Tibial artery (tissue), 4 donors: ENCODE measurements at regions of chr3 and their contacts with region 1.

Region 1: DNA sequence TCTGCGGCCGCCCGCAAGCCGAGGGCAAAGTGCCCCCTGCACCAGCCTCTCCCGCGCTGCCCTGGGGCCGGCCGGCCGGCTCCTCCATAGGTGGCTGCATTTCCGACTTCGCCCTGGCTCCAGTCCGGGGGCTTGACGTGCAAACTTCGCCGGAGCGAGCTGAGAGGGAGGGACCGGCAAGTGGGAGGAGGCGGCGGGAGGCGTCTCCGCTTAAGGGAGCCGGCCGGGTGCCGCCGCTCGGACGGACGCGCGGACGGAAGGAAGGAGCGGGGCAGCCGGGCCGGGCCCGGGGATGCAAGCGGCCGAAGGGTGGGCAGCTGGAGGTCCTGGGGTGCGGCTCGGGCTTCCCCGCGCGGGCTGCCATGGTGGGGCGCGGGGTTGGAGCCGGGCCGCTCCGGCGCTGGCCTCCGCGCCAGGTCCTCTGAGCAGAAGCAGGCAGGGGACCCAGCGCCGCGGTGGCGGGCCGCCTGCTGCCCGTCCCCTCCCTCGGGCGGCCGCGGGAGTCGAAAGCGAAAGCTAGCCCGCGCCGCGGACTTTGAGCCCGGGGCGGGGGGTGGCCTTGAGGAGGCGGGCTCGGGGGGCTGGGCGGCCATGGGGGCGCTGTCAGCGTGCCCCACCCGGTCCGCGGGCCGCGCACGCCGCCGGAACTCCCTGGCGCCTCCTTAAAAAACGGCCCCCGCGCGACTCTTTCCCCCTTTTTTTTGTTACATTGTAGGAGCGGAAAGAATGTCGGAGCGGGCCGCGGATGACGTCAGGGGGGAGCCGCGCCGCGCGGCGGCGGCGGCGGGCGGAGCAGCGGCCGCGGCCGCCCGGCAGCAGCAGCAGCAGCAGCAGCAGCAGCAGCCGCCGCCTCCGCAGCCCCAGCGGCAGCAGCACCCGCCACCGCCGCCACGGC is at the start of gene SCAANT1:
- DNase-seq: peak; percentile 92 to 95
- H3K4me3 ChIP-seq: peak within 1 kb of the TSS; percentile 84 to 98
- H3K27ac ChIP-seq: peak within 1 kb of the TSS; percentile 95 to 99
- H3K4me1 ChIP-seq: peaks cover 0 to 40% (median 21%) of the 10 kb centered on the region in 4 donors
- H3K27me3 ChIP-seq: no peaks in the 10 kb centered on the region
- CTCF ChIP-seq: peak in 1 of 2 experiments; percentile 40

Region 2: GRCh38 chr3:63863148-63864007 is 48.7 kb before region 1 on chr3 and contains the starts of genes ATXN7 and THOC7:
- intact Hi-C with region 1: loop called (anchors 5 kb)
- DNase-seq: peak; percentile 51 to 83
- H3K4me3 ChIP-seq: peak within 1 kb of the TSS; percentile 98 to 99
- H3K27ac ChIP-seq: peak within 1 kb of the TSS; percentile 94 to 95
- H3K4me1 ChIP-seq: peaks cover 0 to 19% (median 12%) of the 10 kb centered on the region in 4 donors
- H3K27me3 ChIP-seq: no peaks in the 10 kb centered on the region
- CTCF ChIP-seq: no peak

Region 3: GRCh38 chr3:63993653-63994079 is 81.5 kb after region 1 on chr3:
- intact Hi-C with region 1: loop called (anchors 10 kb)
- DNase-seq: peak; percentile 74 to 77
- H3K4me3 ChIP-seq: no peak overlapping the region
- H3K27ac ChIP-seq: no peak overlapping the region
- H3K4me1 ChIP-seq: no peaks in the 10 kb centered on the region
- H3K27me3 ChIP-seq: no peaks in the 10 kb centered on the region
- CTCF ChIP-seq: peak; percentile 90 to 95

Region 4: GRCh38 chr3:65019443-65020055 is 1107.4 kb after region 1 on chr3:
- intact Hi-C with region 1: no loop called
- DNase-seq: no peak
- H3K4me3 ChIP-seq: no peak overlapping the region
- H3K27ac ChIP-seq: no peak overlapping the region
- H3K4me1 ChIP-seq: no peaks in the 10 kb centered on the region
- H3K27me3 ChIP-seq: no peaks in the 10 kb centered on the region
- CTCF ChIP-seq: no peak